Panc1 (cell line): ENCODE measurements at regions of chr6 and their contacts with region 1.

Region 1: DNA sequence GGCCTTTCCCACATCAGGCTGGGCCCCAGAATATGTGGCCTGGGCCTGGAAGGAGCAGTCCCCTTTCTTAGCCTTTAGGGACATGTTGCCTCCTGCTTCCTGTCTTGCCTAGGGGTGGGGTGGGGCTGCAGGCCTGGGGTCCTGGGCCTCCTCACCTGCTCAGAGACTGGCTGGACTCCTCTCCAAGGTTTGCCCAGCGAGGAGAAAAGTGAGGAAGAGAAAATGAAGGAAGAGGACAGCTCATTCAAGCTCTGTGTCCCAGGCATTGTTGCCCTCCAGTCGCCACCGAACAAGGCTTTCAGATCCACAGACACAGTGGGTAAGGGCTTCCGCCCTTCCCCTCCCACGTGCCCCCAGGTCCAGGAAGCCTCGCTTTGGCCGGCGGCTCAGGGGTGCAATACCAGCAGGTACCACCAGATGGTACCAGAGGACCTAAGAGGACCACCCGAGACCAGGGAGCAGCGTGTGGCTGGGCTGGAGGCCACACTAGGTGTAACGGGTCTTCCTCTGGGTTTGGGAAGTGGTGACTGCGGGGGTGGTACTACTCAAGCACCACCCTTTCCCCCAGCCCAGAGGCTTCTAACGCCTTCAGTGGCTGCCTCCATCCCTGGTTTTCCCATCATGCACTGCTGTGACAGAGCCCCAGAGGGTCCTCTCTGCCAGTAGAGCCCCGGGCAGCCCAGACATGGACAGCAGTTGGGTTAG is 5.5 kb upstream of the BAK1 start:
- DNase-seq: no peak
- ATAC-seq: peak; percentile 70
- H3K4me3 ChIP-seq: 0 out of 4 replicates have a peak overlapping the region, but pooled peaks of 1 of the 2 experiments have one; percentile 3
- H3K27ac ChIP-seq: peak overlapping the region; percentile 54; the same call in 1 of the 2 replicates
- H3K4me1 ChIP-seq: peaks cover 20% of the 10 kb centered on the region
- H3K27me3 ChIP-seq: no peaks in the 10 kb centered on the region
- CTCF ChIP-seq: peak; percentile 96

Region 2: DNA sequence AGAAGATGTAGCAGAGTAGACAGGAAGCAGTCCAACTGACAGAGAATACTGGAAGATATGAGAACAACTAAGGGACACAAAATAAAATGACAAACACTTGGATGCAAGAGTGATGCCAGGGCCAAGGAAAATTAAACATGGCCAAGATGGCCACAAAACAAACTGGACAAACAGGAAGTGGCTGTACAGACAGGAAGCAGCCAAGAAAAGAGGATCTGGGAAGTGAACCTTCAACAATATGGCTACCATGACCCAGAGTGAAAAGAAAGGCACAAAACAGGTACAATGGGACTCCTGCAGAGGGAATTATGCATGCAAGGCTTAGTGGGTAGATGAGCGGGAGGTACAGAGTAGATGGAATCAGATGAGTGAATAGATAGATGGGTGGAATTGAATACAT is 480.7 kb before region 1 on chr6:
- CTCF ChIA-PET with region 1: no interaction called
- POLR2A ChIA-PET with region 1: no interaction called
- in situ Hi-C with region 1: no loop called
- intact Hi-C with region 1: no loop called
- DNase-seq: no peak
- ATAC-seq: no peak
- H3K4me3 ChIP-seq: no peak overlapping the region
- H3K27ac ChIP-seq: no peak overlapping the region
- H3K4me1 ChIP-seq: no peaks in the 10 kb centered on the region
- H3K27me3 ChIP-seq: peaks cover 19% of the 10 kb centered on the region
- CTCF ChIP-seq: no peak

Region 3: GRCh38 chr6:33547499-33547898 is 38.1 kb before region 1 on chr6:
- CTCF ChIA-PET with region 1: no interaction called
- POLR2A ChIA-PET with region 1: no interaction called
- in situ Hi-C with region 1: no loop called
- intact Hi-C with region 1: no loop called
- DNase-seq: no peak
- ATAC-seq: no peak
- H3K4me3 ChIP-seq: no peak overlapping the region
- H3K27ac ChIP-seq: no peak overlapping the region
- H3K4me1 ChIP-seq: no peaks in the 10 kb centered on the region
- H3K27me3 ChIP-seq: no peaks in the 10 kb centered on the region
- CTCF ChIP-seq: no peak

Region 4: DNA sequence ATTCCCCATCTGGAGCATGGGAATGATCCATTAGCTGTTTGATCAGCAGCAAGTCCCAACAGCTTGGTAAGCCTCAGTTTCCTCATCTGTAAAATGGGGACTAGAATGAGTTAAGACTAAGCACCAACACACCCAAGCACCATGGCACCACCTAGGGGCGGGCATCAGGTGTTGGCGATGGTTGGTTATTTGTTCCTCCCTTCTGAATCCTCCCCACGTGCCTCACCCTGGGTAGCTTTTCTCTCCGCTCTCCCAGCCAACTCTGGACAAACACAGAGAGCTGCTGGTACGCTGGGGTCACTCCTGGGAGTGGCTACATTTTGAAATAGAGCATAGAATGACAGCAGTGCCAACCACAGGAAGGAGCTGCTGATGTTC is 22.2 kb after region 1 on chr6:
- CTCF ChIA-PET with region 1: interaction called, 13 read pairs
- POLR2A ChIA-PET with region 1: no interaction called
- in situ Hi-C with region 1: no loop called
- intact Hi-C with region 1: no loop called
- DNase-seq: no peak
- ATAC-seq: peak; percentile 60
- H3K4me3 ChIP-seq: no peak overlapping the region
- H3K27ac ChIP-seq: peak overlapping the region; percentile 30; the same call in 1 of the 2 replicates
- H3K4me1 ChIP-seq: peaks cover 27% of the 10 kb centered on the region
- H3K27me3 ChIP-seq: no peaks in the 10 kb centered on the region
- CTCF ChIP-seq: no peak; the same call in 1 of the 2 replicates

Region 5: DNA sequence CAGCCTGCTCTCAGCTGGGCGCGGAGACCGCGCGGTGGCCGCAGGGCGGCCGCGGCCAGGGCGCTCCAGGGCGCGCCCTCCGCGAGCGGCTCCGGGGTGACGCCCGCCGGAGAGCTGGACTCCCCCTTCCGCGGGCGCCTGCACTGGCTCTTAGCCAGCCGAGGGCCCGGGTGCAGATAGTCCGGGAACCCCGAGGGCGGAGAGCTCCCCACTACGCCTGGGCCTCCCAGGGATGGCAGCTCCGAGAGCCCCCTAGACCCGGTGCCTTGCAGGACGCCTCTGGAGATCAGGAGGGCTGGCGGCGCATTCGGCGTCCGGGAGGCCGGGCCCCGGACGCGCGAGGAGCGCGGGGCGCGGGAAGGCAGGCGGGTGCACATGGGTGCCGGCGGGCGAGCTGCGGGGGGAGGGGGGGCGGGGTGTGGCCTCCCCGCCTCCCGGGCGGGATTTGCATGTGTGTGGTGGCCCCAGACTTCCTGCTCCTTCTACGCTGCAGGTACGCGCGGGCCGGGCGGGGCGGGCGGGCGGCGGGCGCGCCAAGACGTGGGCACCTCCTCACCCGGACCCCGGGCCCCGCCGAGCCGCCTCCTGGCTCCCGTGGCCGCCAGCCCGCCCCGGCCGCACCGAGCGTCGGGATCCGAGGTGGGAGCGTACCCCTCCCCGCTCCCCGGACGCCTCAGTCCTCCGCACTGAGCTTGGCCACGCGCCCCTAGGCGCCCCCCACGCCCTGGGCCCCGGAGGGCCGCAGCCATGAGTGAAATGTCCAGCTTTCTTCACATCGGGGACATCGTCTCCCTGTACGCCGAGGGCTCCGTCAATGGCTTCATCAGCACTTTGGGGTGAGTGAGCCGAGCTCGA is 35.5 kb after region 1 on chr6 and contains the start of gene ITPR3:
- CTCF ChIA-PET with region 1: interaction called, 3 read pairs
- POLR2A ChIA-PET with region 1: no interaction called
- in situ Hi-C with region 1: no loop called
- intact Hi-C with region 1: loop called (anchors 5 kb)
- DNase-seq: no peak
- ATAC-seq: peak; percentile 76
- H3K4me3 ChIP-seq: peak within 1 kb of the TSS; percentile 82 to 87
- H3K27ac ChIP-seq: peak within 1 kb of the TSS; percentile 87
- H3K4me1 ChIP-seq: peaks cover 32% of the 10 kb centered on the region
- H3K27me3 ChIP-seq: no peaks in the 10 kb centered on the region
- CTCF ChIP-seq: no peak
- total RNA-seq, gene ITPR3: 65.8 TPM

Region 6: GRCh38 chr6:33700391-33701050 is 115.0 kb after region 1 on chr6:
- CTCF ChIA-PET with region 1: interaction called, 4 read pairs
- POLR2A ChIA-PET with region 1: interaction called, 3 read pairs
- in situ Hi-C with region 1: no loop called
- intact Hi-C with region 1: loop called (anchors 2 kb)
- DNase-seq: peak; percentile 61
- ATAC-seq: peak; percentile 76
- H3K4me3 ChIP-seq: no peak overlapping the region
- H3K27ac ChIP-seq: peak overlapping the region; percentile 11; the same call in 1 of the 2 replicates
- H3K4me1 ChIP-seq: peaks cover 17% of the 10 kb centered on the region
- H3K27me3 ChIP-seq: no peaks in the 10 kb centered on the region
- CTCF ChIP-seq: peak; percentile 92